Heart left ventricle (tissue), 16 donors: ENCODE measurements at regions of chr3 and their contacts with region 1.

Region 1: DNA sequence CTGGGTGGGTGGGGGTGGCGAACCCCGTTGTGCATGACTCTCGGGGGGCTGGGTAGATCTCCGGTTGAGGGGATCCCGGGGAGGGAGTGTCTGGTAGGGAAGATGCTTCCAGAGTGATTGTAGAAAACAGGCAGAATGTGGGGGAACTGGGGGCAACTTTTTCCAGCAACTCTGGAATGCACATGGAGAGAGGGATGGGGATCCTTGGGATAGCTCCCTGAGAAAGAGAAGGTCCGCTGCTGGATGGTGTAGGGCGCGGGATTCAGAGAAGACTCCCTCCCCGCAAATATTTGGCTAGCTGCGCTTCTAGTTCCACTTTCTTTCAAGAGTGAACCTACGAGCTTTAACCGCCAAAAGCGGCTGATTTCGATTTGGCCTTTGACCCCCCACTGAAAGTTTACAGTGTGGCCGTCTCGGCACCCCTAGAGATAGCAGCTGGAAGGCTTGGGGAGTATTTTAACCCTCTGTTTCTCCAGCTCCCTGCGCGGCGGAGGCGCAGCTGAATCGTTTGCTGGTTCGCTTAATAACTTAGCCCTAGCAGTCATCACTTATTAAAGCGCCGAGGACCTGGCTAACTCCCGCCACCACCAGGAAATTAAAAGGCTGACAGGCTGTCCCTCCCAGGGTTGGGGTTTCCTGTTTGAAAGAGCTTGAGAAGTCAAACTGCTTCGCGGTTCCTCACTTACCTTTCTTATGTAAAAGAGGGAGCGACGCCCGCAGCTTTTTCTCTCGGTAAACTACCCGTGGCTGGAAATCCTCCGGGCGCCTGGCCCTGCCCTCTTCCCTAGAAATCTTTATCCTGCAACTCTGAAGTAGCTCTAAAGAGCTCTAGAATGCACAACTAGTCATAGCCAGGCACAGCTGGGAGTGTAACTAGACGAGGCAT is 1.2 kb downstream of the PHLDB2 start:
- DNase-seq: peak; percentile 78 to 86 (median 83)
- ATAC-seq: peak; percentile 68 to 80 (median 77)
- H3K4me3 ChIP-seq: peak overlapping the region; percentile 59 to 98 (median 86)
- H3K27ac ChIP-seq: peak overlapping the region; percentile 94 to 99 (median 96)
- H3K4me1 ChIP-seq: peaks cover 2 to 52% (median 40%) of the 10 kb centered on the region in 12 donors
- H3K27me3 ChIP-seq: peaks cover 0 to 10% (median 0%) of the 10 kb centered on the region in 9 donors
- CTCF ChIP-seq: peak; percentile 38 to 73 (median 58)
- POLR2A ChIP-seq: peak in 1 of 2 donors; percentile 65

Region 2: GRCh38 chr3:111717601-111718000 is 142.6 kb before region 1 on chr3:
- intact Hi-C with region 1: loop called (anchors 1 to 5 kb)
- DNase-seq: peak in 4 of 5 donors; percentile 71 to 79 (median 75)
- ATAC-seq: peak; percentile 71 to 90 (median 90)
- H3K4me3 ChIP-seq: no peak overlapping the region
- H3K27ac ChIP-seq: peak overlapping the region in 7 of 12 donors; percentile 8 to 49 (median 28)
- H3K4me1 ChIP-seq: peaks cover 0 to 29% (median 11%) of the 10 kb centered on the region in 12 donors
- H3K27me3 ChIP-seq: no peaks in the 10 kb centered on the region
- CTCF ChIP-seq: peak; percentile 91 to 99 (median 95)
- POLR2A ChIP-seq: no peak

Region 3: GRCh38 chr3:111737706-111738086 is 122.5 kb before region 1 on chr3:
- intact Hi-C with region 1: loop called in 9 of 10 experiments (anchors 1 to 5 kb)
- DNase-seq: peak in 4 of 5 donors; percentile 58 to 76 (median 72)
- ATAC-seq: peak; percentile 77 to 88 (median 79)
- H3K4me3 ChIP-seq: no peak overlapping the region
- H3K27ac ChIP-seq: peak overlapping the region; percentile 74 to 88 (median 82)
- H3K4me1 ChIP-seq: peaks cover 7 to 67% (median 50%) of the 10 kb centered on the region in 12 donors
- H3K27me3 ChIP-seq: no peaks in the 10 kb centered on the region
- CTCF ChIP-seq: no peak
- POLR2A ChIP-seq: no peak

Region 4: GRCh38 chr3:111761309-111761831 is 98.8 kb before region 1 on chr3:
- intact Hi-C with region 1: no loop called
- DNase-seq: no peak
- ATAC-seq: peak in 3 of 4 donors; percentile 29 to 76 (median 57)
- H3K4me3 ChIP-seq: no peak overlapping the region
- H3K27ac ChIP-seq: peak overlapping the region in 9 of 12 donors; percentile 28 to 81 (median 65)
- H3K4me1 ChIP-seq: peaks cover 0 to 45% (median 26%) of the 10 kb centered on the region in 12 donors
- H3K27me3 ChIP-seq: no peaks in the 10 kb centered on the region
- CTCF ChIP-seq: no peak
- POLR2A ChIP-seq: no peak

Region 5: GRCh38 chr3:111824351-111824750 is 35.9 kb before region 1 on chr3:
- intact Hi-C with region 1: loop called in 1 of 10 experiments (anchors 2 kb)
- DNase-seq: peak in 1 of 5 donors; percentile 19
- ATAC-seq: peak in 1 of 4 donors; percentile 39
- H3K4me3 ChIP-seq: no peak overlapping the region
- H3K27ac ChIP-seq: peak overlapping the region in 9 of 12 donors; percentile 6 to 55 (median 32)
- H3K4me1 ChIP-seq: peaks cover 0 to 40% (median 17%) of the 10 kb centered on the region in 12 donors
- H3K27me3 ChIP-seq: no peaks in the 10 kb centered on the region
- CTCF ChIP-seq: no peak
- POLR2A ChIP-seq: no peak

Region 6: DNA sequence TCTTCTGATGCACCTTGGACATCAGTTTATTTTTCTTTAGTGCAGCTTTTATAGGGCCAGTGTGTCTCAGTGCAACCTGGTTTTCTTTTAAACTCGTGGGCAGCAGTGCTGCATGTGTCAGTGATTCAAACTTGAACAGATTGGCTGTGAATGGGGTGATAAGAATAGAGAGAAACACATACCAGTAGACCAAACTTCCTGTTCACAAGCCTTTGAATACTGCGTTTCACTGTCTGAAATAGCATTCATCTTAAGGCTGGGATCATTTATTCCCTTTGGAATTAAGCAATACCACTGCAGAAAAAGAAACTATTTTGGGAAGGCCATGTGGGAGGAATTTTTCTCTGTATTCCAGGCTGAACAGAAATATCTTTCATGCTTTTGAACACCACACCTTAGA is 50.6 kb after region 1 on chr3:
- intact Hi-C with region 1: loop called in 5 of 10 experiments (anchors 5 to 10 kb)
- DNase-seq: no peak
- ATAC-seq: peak; percentile 47 to 85 (median 74)
- H3K4me3 ChIP-seq: no peak overlapping the region
- H3K27ac ChIP-seq: peak overlapping the region in 11 of 12 donors; percentile 7 to 64 (median 51)
- H3K4me1 ChIP-seq: peaks cover 6 to 72% (median 48%) of the 10 kb centered on the region in 12 donors
- H3K27me3 ChIP-seq: no peaks in the 10 kb centered on the region
- CTCF ChIP-seq: no peak
- POLR2A ChIP-seq: no peak

Region 7: DNA sequence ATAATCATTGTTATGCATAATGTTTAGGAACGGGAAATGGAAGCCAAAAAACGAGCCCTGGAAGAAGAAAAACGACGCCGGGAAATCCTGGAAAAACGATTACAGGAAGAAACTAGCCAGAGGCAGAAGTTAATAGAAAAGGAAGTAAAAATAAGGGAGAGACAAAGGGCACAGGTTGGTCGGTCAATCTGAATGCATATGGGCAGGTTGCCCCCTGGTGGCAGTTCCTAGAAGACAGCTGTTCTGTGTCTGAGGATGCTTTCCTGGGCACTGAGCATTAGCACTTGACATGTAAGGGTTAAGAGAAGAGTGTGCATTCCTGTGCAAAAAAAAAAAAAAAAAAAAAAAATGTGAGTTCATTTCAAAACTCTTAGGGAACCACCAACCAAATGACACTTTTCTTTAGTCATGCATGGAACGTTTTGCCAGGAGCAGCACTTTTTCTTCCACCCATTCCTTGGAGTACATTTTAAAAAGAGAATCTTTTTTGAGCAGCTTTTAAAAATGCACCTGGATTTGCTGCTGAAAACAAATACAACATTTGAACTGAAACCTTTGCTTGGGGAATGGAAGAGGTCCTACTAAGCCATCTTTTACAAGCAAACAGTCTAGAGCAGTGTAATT is 107.5 kb after region 1 on chr3:
- intact Hi-C with region 1: loop called (anchors 1 to 5 kb)
- DNase-seq: peak; percentile 74 to 89 (median 82)
- ATAC-seq: peak; percentile 50 to 84 (median 76)
- H3K4me3 ChIP-seq: no peak overlapping the region
- H3K27ac ChIP-seq: peak overlapping the region in 11 of 12 donors; percentile 24 to 68 (median 58)
- H3K4me1 ChIP-seq: peaks cover 0 to 47% (median 25%) of the 10 kb centered on the region in 12 donors
- H3K27me3 ChIP-seq: no peaks in the 10 kb centered on the region
- CTCF ChIP-seq: peak; percentile 78 to 95 (median 88)
- POLR2A ChIP-seq: no peak